Activated T-helper 2 cell treated with anti-CD3 and anti-CD28 coated beads, Interferon-gamma antibody, Interleukin-2, Interleukin-4, amounts not matched to agents 10 μg/mL and 5 μg/mL and 100 μg/mL, durations not matched to agents 14 hours and 24 hours and 36 hours (primary cell): ENCODE measurements at regions of chr20 and their contacts with region 1.

Region 1: DNA sequence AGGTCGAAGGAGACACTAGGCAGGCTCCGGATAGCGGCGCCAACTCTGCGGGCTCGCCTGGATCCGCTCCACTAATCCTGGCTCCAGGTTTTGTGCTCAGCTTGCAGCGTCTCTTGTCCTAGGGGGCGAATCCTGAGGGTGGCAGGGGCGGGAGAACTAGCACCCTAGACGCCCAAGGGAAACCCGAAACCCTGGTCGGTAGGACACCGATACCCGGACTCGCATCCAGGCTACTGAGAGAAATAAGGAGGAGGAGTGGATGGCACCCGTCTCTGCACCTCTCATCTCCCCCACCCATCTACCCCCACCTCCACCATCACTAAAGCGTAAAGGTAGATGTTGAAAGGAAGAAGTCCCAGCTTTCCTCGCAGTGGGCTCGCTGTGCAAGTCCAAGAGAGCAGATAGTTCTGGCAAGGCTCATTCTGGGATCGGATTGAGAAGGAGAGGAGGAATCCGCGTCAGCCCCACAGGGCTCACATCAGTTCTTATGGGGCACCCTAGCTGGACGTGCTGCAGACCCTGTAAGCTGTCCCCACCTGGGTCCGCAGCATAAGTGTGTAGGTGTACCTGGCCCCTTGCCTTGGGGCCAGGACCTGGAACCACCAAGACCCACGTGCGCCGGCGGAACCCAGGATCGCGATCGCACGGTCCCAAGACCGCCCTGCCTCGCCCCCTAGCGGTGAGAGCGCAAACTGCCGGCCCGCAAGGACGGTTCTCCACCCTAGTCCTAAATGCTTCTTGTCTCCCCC is 6.9 kb downstream of the SLC32A1 start:
- DNase-seq: peak; percentile 62
- H3K4me3 Mint-ChIP-seq: peak overlapping the region; percentile 28
- H3K27ac Mint-ChIP-seq: peak overlapping the region; percentile 46
- H3K4me1 Mint-ChIP-seq: peaks cover 33% of the 10 kb centered on the region
- H3K27me3 Mint-ChIP-seq: peaks cover 85% of the 10 kb centered on the region

Region 2: DNA sequence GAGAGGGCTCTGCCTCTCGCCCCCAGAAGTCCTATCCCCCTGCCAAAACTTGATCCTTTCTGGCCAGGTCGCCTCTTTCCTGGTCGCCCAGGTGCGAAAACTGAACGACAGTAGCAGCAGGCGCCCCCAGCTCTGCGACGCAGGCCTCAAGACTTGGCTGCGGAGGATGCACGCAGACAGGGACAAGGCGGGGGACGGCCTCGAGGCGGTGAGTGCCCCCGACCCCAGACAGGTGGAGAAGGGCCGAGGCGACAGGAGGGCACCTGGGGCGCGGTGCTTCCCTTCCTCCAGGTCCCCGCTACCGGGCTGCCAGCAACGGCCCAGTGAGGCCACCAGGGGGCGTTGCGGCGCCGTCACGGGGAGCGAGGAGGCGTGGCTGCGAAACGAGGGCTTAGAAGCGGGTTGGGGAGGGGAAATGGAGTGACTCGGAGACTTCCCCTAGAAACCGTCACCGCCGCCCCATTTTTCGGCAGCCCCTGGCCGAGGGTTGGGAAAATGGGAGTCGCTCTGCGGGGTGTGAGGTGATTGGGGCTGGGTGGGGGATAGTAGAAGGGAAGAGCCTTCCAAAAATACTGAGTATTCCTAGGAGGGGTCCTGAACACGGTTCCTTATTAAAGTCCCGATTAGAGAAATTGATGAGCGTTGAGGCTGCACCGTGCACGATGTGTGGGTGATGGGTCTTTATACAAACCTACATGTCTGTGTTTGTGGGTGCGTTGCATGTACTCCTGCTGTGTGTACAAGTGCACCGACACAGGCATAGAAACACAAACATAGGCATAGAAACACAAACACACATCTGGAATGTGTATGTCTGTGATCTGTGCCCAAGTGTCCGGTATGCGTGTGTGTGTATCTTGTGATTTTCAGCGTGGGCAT is 84.9 kb before region 1 on chr20:
- intact Hi-C with region 1: loop called (anchors 2 kb)
- DNase-seq: peak; percentile 87
- H3K4me3 Mint-ChIP-seq: peak overlapping the region; percentile 77
- H3K27ac Mint-ChIP-seq: peak overlapping the region; percentile 23
- H3K4me1 Mint-ChIP-seq: peaks cover 7% of the 10 kb centered on the region
- H3K27me3 Mint-ChIP-seq: peaks cover 33% of the 10 kb centered on the region

Region 3: GRCh38 chr20:38674092-38674764 is 56.9 kb before region 1 on chr20:
- intact Hi-C with region 1: no loop called
- DNase-seq: peak; percentile 47
- H3K4me3 Mint-ChIP-seq: peak overlapping the region; percentile 82
- H3K27ac Mint-ChIP-seq: no peak overlapping the region
- H3K4me1 Mint-ChIP-seq: peaks cover 5% of the 10 kb centered on the region
- H3K27me3 Mint-ChIP-seq: peaks cover 41% of the 10 kb centered on the region

Region 4: DNA sequence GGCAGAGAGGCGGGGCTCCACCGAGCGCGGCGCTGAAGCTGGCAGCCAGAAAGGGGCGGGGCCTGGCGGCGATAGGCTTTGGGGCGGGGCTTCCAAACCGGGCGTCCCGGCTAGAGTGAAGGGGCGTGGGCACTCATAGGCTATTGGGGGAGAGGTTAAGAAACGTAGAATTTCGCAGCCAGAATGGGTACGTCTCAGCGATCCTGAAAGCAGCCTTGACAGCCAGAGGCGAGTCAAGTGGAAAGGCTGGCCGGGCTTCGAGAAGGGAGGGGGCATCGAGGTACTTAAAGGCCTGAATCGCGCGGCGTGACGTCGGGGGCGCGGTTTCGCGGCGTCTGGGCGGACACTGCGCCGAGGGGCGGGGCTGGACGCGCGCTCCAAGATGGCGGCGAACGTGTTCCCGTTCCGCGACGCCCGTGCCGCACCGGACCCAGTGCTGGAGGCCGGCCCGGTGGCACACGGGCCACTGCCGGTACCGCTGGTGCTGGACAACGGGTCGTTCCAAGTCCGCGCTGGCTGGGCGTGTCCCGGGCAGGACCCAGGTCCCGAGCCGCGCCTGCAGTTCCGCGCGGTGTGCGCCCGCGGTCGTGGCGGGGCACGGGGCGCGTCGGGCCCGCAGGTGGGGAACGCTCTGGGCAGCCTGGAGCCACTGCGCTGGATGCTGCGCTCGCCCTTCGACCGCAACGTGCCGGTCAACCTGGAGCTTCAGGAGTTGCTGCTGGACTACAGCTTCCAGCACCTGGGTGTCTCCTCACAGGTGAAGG is 17.1 kb after region 1 on chr20 and contains the start of gene ACTR5:
- intact Hi-C with region 1: loop called (anchors 2 kb)
- DNase-seq: peak; percentile 94
- H3K4me3 Mint-ChIP-seq: peak within 1 kb of the TSS; percentile 93
- H3K27ac Mint-ChIP-seq: peak within 1 kb of the TSS; percentile 95
- H3K4me1 Mint-ChIP-seq: peaks cover 22% of the 10 kb centered on the region
- H3K27me3 Mint-ChIP-seq: peaks cover 6% of the 10 kb centered on the region
- total RNA-seq, gene ACTR5: 12.1 and 13.2 TPM in 2 replicates

Region 5: DNA sequence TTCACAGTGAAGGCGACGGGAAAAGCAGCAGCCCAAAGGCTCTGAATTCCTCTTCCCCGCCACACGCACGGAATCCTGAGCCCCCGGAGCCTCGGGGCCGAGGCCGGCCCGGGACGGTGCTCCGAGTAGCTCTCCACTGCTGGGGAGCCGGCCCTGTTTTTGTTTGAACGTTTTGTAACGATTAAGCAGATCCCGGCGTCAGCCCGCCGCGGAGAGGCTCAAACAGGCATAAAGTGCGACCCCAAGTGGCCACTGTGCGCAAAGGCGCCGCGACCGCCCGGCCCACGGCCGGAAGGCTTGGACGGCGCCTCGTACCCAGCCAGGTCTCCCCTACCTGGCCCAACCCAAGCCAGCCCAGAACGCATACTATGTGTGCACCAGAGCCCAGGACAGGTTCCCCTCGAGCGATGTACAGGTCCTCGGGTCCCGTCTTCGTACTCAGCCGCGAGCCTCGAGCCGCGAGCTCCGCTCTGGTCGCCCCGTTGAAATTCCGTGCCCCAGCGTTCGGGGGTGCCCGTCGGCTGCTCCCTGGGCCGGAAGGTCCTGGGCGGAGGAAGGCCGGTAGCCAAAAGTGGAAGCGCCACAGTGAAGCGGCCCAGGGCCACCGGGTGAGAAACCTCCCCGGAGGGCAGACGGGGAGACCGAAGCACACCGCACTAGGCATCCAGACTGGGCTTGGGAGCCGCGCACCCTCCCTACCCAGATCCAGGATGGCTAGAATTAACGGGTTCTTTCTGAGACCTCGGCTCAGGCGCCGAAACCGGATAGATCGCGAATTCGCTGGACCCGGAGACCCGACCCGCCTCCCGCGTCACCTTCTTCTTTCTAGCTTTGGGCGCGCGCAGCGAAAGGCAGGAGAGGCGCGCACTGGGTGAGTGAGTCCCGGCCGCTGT is 1959.0 kb after region 1 on chr20:
- intact Hi-C with region 1: loop called (anchors 2 kb)
- DNase-seq: peak; percentile 72
- H3K4me3 Mint-ChIP-seq: peak overlapping the region; percentile 74
- H3K27ac Mint-ChIP-seq: no peak overlapping the region
- H3K4me1 Mint-ChIP-seq: peaks cover 6% of the 10 kb centered on the region
- H3K27me3 Mint-ChIP-seq: peaks cover 91% of the 10 kb centered on the region